ENCODE measurements at regions of chr18 and their contacts with region 1.

Region 1: DNA sequence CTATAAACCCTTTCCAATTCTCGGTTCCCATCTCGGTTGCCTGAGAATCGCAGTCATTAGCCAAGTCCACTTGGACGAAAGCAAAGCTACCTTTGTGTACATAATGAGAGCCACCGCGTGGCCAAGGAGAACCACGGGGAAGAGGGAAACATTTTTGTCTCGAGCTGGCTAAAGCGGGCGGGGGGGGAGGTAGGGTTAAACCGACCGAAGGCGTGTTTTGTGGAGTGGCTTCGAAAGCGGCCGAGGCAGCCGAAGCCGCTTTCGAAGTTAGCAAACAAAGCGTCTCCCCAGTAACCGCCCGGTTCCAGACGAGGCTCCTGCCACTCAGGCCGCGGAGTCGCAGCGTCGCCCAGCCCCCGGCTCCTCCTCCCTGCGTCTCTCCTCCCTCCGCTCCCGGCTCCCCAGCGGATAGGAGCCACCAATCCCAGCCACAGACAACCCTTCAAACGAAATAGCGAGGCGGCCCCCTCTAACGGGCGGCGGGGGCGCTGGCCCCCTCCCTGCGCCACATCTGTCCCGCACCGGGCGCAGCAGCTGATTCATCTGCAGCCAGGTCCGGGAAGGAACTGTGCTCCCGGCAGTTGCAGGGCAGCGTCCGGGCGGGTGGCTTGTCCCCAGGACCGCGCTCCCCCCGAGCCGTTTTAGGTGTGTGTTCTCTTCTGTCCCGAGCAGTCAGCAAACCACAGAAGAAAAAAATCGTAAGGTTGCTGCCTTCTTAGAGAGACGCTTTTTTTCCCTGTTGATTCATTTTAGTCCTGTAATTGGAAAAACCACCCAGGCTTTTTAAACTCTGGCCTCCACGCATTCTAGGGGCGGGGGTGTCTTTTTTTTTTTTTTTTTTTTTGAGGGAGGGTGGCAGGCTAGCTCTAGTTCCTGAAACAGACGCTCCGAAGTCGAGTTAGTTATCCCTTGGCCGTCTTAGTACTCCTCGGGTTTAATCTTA is 1.8 kb upstream of the TGIF1 start:
- DNase-seq: peak; percentile 84
- H3K4me3 Mint-ChIP-seq: peak overlapping the region; percentile 89
- H3K27ac Mint-ChIP-seq: peak overlapping the region; percentile 97
- H3K4me1 Mint-ChIP-seq: peaks cover 22% of the 10 kb centered on the region
- H3K27me3 Mint-ChIP-seq: no peaks in the 10 kb centered on the region

Region 2: DNA sequence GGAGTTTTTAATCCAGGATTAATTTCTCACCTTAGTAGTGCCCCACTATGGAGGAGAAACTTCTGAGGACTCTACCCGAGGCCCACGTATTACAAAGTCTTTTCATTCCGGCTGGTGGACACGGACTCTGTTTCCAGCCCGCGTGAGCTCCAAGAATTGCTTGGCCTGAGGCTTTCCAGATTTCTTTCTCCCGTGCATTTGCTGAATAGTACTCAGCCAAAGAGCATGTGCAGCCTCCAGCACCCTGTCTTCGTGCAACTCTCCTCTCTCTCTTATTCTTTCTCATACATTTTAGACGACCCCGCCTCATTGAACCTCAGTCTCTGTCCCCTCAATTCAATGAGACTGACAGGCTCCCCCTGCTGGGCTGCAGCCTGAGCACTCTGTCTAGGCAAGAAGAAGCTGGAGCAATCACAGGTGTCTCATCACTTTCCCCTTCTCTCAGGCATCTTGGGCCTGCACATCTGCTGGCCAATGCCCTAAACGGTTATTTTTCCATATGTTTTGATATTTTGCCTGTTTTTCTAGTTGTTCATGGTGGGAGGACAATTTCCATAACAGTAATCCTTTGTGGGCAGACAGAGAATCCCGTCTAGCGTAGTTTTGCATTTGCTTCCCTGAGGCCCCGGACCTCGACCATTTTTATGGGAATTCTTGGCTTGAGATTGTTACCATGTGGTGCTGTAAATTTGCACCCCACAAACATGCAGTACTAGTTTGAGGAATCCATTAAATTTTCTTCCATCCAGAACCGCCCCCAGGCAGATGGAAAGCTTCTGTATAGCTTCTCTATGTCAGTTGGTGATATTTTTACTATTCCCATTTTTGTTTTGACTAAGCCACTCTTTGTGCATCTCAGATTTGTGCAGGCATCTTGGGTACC is 385.1 kb before region 1 on chr18:
- intact Hi-C with region 1: loop called (anchors 2 kb)
- DNase-seq: peak; percentile 62
- H3K4me3 Mint-ChIP-seq: peak overlapping the region; percentile 67
- H3K27ac Mint-ChIP-seq: peak overlapping the region; percentile 87
- H3K4me1 Mint-ChIP-seq: peaks cover 63% of the 10 kb centered on the region
- H3K27me3 Mint-ChIP-seq: no peaks in the 10 kb centered on the region

Region 3: GRCh38 chr18:3297025-3297984 is 150.9 kb before region 1 on chr18:
- intact Hi-C with region 1: loop called (anchors 2 kb)
- DNase-seq: peak; percentile 91
- H3K4me3 Mint-ChIP-seq: peak overlapping the region; percentile 87
- H3K27ac Mint-ChIP-seq: peak overlapping the region; percentile 59
- H3K4me1 Mint-ChIP-seq: peaks cover 7% of the 10 kb centered on the region
- H3K27me3 Mint-ChIP-seq: peaks cover 35% of the 10 kb centered on the region

Region 4: GRCh38 chr18:3380384-3380961 is 67.7 kb before region 1 on chr18:
- intact Hi-C with region 1: loop called (anchors 2 kb)
- DNase-seq: no peak
- H3K4me3 Mint-ChIP-seq: no peak overlapping the region
- H3K27ac Mint-ChIP-seq: no peak overlapping the region
- H3K4me1 Mint-ChIP-seq: peaks cover 4% of the 10 kb centered on the region
- H3K27me3 Mint-ChIP-seq: no peaks in the 10 kb centered on the region

Region 5: GRCh38 chr18:3424280-3424890 is 23.8 kb before region 1 on chr18:
- intact Hi-C with region 1: no loop called
- DNase-seq: no peak
- H3K4me3 Mint-ChIP-seq: no peak overlapping the region
- H3K27ac Mint-ChIP-seq: no peak overlapping the region
- H3K4me1 Mint-ChIP-seq: no peaks in the 10 kb centered on the region
- H3K27me3 Mint-ChIP-seq: peaks cover under 1% of the 10 kb centered on the region

Region 6: GRCh38 chr18:3525870-3526420 is 77.8 kb after region 1 on chr18:
- intact Hi-C with region 1: no loop called
- DNase-seq: peak; percentile 45
- H3K4me3 Mint-ChIP-seq: no peak overlapping the region
- H3K27ac Mint-ChIP-seq: peak overlapping the region; percentile 39
- H3K4me1 Mint-ChIP-seq: peaks cover 16% of the 10 kb centered on the region
- H3K27me3 Mint-ChIP-seq: peaks cover 6% of the 10 kb centered on the region

Region 7: DNA sequence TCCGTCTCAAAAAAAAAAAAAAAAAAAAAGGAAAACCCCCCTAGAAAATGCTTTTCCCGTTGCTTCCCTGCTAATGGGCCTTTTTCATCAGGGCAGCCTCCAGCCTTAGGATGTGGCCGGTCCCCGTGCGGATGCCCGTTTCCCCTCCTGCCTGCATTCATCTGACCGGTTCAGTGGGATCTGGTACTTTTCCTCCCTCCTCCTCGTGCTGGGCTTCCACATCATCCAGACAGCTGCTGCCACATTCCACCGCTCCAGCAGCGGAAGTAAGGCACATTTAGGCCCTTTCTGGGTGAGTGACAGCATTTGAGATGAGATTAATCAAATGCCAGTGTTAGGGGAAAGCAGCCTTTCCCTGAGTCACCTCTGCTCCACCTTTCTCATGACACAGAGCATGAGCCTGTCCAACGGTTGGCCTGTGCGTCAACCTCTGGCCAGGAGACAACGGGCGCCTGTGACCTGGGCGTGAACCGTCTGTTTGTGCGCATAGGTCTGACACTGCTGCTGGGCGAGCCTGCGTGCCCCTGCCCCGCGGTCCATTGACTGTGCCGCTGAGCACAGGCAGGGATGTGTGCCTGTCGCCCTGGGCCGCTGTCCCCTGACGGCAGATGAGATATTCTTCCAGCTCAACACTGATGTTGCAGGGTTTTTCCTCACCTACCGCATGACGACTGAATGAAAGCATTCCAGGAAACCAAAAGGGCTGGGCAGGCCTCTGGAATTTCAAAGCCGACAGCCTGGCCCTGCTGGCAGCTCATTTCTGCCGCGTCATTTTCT is 175.8 kb after region 1 on chr18:
- intact Hi-C with region 1: loop called (anchors 1 kb)
- DNase-seq: no peak
- H3K4me3 Mint-ChIP-seq: peak overlapping the region; percentile 60
- H3K27ac Mint-ChIP-seq: peak overlapping the region; percentile 92
- H3K4me1 Mint-ChIP-seq: peaks cover 37% of the 10 kb centered on the region
- H3K27me3 Mint-ChIP-seq: no peaks in the 10 kb centered on the region

Region 8: GRCh38 chr18:4060427-4061281 is 612.5 kb after region 1 on chr18:
- intact Hi-C with region 1: no loop called
- DNase-seq: no peak
- H3K4me3 Mint-ChIP-seq: no peak overlapping the region
- H3K27ac Mint-ChIP-seq: no peak overlapping the region
- H3K4me1 Mint-ChIP-seq: no peaks in the 10 kb centered on the region
- H3K27me3 Mint-ChIP-seq: no peaks in the 10 kb centered on the region

Measured in activated T-helper 2 cell treated with anti-CD3 and anti-CD28 coated beads, Interferon-gamma antibody, Interleukin-2, Interleukin-4, amounts not matched to agents 10 μg/mL and 5 μg/mL and 100 μg/mL, durations not matched to agents 14 hours and 24 hours and 36 hours (primary cell).